ENCODE measurements at regions of chr15 and their contacts with region 1.

Region 1: GRCh38 chr15:65028921-65029735 is at the start of gene MTFMT:
- DNase-seq: peak; percentile 41 to 81
- H3K4me3 ChIP-seq: peak within 1 kb of the TSS; percentile 88
- H3K27ac ChIP-seq: no peak within 1 kb of the TSS
- H3K4me1 ChIP-seq: peaks cover 10% of the 10 kb centered on the region; the same call in 1 of the 2 replicates
- H3K27me3 ChIP-seq: no peaks in the 10 kb centered on the region
- CTCF ChIP-seq: no peak
- total RNA-seq, gene MTFMT: 16.0 and 24.9 TPM in 2 replicates

Region 2: GRCh38 chr15:64067564-64068030 is 961.5 kb before region 1 on chr15:
- CTCF ChIA-PET with region 1: interaction called, 13 read pairs
- POLR2A ChIA-PET with region 1: no interaction called
- intact Hi-C with region 1: no loop called
- DNase-seq: peak in 1 of 2 experiments; percentile 59
- H3K4me3 ChIP-seq: no peak overlapping the region
- H3K27ac ChIP-seq: no peak overlapping the region
- H3K4me1 ChIP-seq: no peaks in the 10 kb centered on the region
- H3K27me3 ChIP-seq: no peaks in the 10 kb centered on the region
- CTCF ChIP-seq: peak; percentile 80

Region 3: GRCh38 chr15:64950888-64951287 is 78.2 kb before region 1 on chr15:
- CTCF ChIA-PET with region 1: no interaction called
- POLR2A ChIA-PET with region 1: no interaction called
- intact Hi-C with region 1: no loop called
- DNase-seq: peak in 1 of 2 experiments; percentile 57
- H3K4me3 ChIP-seq: no peak overlapping the region
- H3K27ac ChIP-seq: peak overlapping the region; percentile 72
- H3K4me1 ChIP-seq: no peaks in the 10 kb centered on the region
- H3K27me3 ChIP-seq: no peaks in the 10 kb centered on the region
- CTCF ChIP-seq: no peak

Region 4: DNA sequence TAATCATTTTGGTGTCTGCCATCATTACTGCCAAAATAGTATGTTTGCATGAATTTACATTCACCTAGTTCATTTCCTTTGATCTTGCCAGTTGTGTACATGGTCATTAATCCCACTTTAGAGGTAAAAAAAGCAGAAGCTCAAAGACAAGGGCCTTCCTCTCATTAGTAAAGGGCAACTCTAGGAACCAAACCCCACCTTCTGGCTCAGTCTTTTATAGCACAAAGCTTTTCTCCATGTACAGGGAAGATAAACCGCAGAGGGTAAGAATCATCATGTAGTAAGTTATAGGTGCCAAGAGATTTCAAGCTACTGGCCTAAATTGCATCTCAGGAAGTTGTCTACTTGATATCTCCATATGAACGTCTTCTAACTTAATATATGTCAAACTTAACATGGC is 20.1 kb before region 1 on chr15:
- CTCF ChIA-PET with region 1: no interaction called
- POLR2A ChIA-PET with region 1: no interaction called
- intact Hi-C with region 1: no loop called
- DNase-seq: no peak
- H3K4me3 ChIP-seq: no peak overlapping the region
- H3K27ac ChIP-seq: no peak overlapping the region
- H3K4me1 ChIP-seq: no peaks in the 10 kb centered on the region
- H3K27me3 ChIP-seq: no peaks in the 10 kb centered on the region
- CTCF ChIP-seq: no peak

Region 5: DNA sequence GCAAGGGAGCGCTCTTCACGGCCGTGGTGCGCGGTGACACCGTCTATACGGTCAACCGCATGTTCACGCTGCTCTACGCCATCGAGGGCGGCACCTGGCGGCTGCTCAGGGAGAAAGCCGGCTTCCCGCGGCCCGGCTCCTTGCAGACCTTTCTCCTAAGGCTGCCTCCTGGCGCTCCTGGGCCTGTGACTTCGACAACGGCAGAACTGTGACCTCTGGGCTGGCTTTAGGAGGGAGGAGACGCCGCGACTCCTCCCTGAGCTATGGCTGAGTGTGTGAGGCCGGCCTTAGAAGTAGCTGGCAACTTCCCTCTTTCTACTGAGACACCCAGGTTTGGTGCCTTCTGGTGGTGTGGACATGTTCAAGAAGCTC is 48.8 kb after region 1 on chr15:
- CTCF ChIA-PET with region 1: no interaction called
- POLR2A ChIA-PET with region 1: no interaction called
- intact Hi-C with region 1: loop called (anchors 2 kb)
- DNase-seq: peak in 1 of 2 experiments; percentile 53
- H3K4me3 ChIP-seq: no peak overlapping the region
- H3K27ac ChIP-seq: no peak overlapping the region
- H3K4me1 ChIP-seq: no peaks in the 10 kb centered on the region
- H3K27me3 ChIP-seq: no peaks in the 10 kb centered on the region; the same call in 1 of the 2 replicates
- CTCF ChIP-seq: no peak

Region 6: GRCh38 chr15:65101411-65101890 is 72.3 kb after region 1 on chr15:
- CTCF ChIA-PET with region 1: interaction called, 3 read pairs
- POLR2A ChIA-PET with region 1: no interaction called
- intact Hi-C with region 1: loop called (anchors 1 kb)
- DNase-seq: peak in 1 of 2 experiments; percentile 49
- H3K4me3 ChIP-seq: no peak overlapping the region
- H3K27ac ChIP-seq: no peak overlapping the region
- H3K4me1 ChIP-seq: no peaks in the 10 kb centered on the region
- H3K27me3 ChIP-seq: no peaks in the 10 kb centered on the region
- CTCF ChIP-seq: peak; percentile 77

Region 7: DNA sequence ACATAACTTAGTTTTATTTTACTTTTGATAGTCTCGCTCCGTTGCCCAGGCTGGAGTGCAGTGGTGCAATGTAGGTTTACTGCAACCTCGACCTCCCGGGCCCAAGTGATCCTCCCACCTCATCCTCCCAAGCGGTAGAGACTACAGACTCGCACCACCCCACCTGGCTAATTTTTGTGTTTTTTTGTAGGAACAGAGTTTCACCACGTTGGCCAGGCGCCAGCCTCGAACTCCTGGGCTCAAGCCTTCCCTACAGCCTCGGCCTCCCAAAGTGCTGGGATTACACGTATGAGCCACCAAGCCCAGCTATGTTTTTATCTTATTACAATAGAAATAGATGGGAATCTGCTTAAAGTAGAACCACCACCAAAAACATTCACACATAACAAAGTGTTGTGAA is 269.6 kb after region 1 on chr15:
- CTCF ChIA-PET with region 1: interaction called, 3 read pairs
- POLR2A ChIA-PET with region 1: interaction called, 13 read pairs
- intact Hi-C with region 1: loop called (anchors 1 kb)
- DNase-seq: no peak
- H3K4me3 ChIP-seq: no peak overlapping the region
- H3K27ac ChIP-seq: no peak overlapping the region
- H3K4me1 ChIP-seq: 0 out of 2 replicates have a peak, but pooled peaks cover 20% of the 10 kb centered on the region
- H3K27me3 ChIP-seq: no peaks in the 10 kb centered on the region
- CTCF ChIP-seq: no peak

Region 8: GRCh38 chr15:65384895-65385858 is 356.0 kb after region 1 on chr15:
- CTCF ChIA-PET with region 1: no interaction called
- POLR2A ChIA-PET with region 1: no interaction called
- intact Hi-C with region 1: loop called (anchors 1 kb)
- DNase-seq: peak; percentile 57 to 85
- H3K4me3 ChIP-seq: peak overlapping the region; percentile 46
- H3K27ac ChIP-seq: no peak overlapping the region
- H3K4me1 ChIP-seq: peaks cover 4% of the 10 kb centered on the region; the same call in 1 of the 2 replicates
- H3K27me3 ChIP-seq: peaks cover 18% of the 10 kb centered on the region
- CTCF ChIP-seq: peak; percentile 80